ENCODE measurements at regions of chr2 and their contacts with region 1.

Region 1: DNA sequence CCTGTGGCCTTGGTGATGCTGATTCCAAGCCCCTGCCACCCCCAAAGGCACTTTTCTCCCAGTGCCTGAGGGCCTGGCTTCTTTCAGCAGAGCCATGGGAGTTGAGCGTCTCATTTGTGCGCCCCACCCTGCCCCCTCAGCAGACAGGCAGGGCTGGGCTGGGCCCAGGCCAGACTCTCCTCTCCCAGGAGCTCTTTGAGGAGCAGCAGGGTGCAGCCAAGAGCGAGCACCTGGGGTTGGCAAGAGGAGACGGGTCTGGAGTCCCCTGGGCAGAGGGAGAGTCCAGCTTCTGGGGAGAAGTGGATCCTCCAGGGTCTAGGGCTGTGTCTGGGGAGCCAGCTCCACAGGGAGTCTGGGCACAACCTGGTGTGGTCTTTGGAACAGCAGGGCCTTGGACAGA is 21.2 kb downstream of the NPPC start:
- DNase-seq: no peak
- H3K4me3 Mint-ChIP-seq: no peak overlapping the region
- H3K27ac Mint-ChIP-seq: no peak overlapping the region
- H3K4me1 Mint-ChIP-seq: peaks cover 7% of the 10 kb centered on the region
- H3K27me3 Mint-ChIP-seq: peaks cover 4% of the 10 kb centered on the region

Region 2: GRCh38 chr2:232228971-232229894 is 324.2 kb after region 1 on chr2:
- intact Hi-C with region 1: loop called (anchors 5 kb)
- DNase-seq: no peak
- H3K4me3 Mint-ChIP-seq: no peak overlapping the region
- H3K27ac Mint-ChIP-seq: no peak overlapping the region
- H3K4me1 Mint-ChIP-seq: peaks cover 10% of the 10 kb centered on the region
- H3K27me3 Mint-ChIP-seq: no peaks in the 10 kb centered on the region

Region 3: DNA sequence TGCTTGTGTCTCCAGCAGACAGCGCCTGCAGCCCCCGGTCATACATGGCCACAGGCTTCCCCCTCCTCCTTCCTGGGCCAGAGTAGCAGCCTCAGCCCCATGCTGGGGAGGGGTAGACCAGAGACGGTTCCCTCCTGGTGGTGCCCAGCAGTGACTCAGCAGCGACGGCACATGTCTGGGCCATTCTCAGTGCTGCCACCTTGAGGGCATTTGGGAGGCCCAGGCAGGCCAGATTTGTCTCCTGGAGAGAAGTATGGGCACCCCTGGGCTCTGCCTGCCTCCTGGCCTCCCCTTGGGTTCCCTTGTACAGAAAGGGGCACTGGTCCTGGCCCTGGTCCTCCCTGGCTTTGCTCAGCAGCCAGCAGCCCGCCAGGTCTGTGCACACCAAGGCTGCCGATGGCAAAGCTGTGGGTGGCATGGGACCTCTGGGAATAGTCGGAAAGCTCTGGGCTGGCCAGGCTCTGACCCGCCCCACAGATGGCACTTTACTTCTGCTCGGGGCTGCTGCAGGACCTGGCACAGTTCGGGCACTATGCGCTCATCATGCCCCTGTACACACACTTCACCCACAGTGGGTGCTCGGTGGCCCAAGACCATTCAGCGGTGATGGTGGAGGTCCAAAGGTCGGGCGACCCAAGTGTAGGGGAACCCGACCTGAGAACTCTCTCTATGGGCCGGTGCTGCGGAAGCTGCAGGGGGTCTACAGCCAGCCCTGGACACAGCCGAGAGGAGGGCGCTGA is 539.6 kb after region 1 on chr2:
- intact Hi-C with region 1: loop called (anchors 2 kb)
- DNase-seq: peak; percentile 55
- H3K4me3 Mint-ChIP-seq: no peak overlapping the region
- H3K27ac Mint-ChIP-seq: no peak overlapping the region
- H3K4me1 Mint-ChIP-seq: peaks cover 4% of the 10 kb centered on the region
- H3K27me3 Mint-ChIP-seq: no peaks in the 10 kb centered on the region